Posterior vena cava (tissue), 2 donors: ENCODE measurements at regions of chr22 and their contacts with region 1.

Region 1: GRCh38 chr22:32528984-32529982 is 54.7 kb downstream of the FBXO7 start:
- DNase-seq: peak; percentile 96

Region 2: GRCh38 chr22:32564170-32565001 is 35.1 kb after region 1 on chr22:
- intact Hi-C with region 1: no loop called
- DNase-seq: peak; percentile 86

Region 3: DNA sequence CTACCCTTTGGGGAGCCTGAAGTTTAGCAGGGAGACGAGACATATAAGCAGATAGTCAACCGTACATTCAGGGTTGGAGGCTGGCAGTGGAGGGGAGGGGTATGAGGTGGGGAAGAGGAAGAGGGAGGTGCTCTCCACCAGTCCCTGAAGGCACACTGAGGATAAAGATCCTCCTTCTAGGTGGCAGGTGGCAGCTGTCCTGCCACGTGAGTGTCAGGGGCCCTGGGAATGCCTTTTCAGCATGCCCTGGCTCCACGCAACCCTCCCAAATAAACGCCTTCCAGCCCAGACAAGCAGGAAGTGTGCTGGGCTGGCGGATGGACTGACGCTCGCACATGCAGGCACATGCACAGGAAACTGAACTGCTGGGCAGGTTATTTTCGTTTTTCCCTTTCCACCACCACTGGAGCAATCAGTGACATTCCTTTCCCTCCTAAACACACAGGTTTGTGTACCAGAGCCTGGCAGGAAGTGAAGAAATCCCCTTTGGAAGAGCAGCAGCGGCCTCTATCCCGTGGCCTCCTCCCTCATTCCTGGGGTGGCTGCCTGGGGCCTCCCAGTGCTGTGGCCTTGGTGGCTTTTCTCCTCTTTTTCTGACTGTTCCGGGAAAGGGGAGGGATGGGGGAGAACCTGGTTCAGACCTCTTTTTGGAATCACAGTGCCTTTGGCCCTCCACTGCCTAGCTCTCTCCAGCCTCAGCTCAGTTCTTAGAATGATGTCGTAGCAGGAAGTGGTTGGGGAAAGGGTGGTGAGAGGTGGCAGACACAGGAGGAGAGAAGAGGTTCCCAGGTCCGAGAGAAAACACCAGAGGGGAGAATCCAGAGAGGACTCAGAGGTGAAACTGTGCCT is 115.2 kb after region 1 on chr22:
- intact Hi-C with region 1: loop called in 1 of 2 experiments (anchors 10 kb)
- DNase-seq: peak; percentile 86

Region 4: GRCh38 chr22:32796865-32797573 is 267.7 kb after region 1 on chr22:
- intact Hi-C with region 1: loop called (anchors 2 to 5 kb)
- DNase-seq: peak; percentile 91

Region 5: GRCh38 chr22:32985899-32986765 is 456.8 kb after region 1 on chr22:
- intact Hi-C with region 1: loop called in 1 of 2 experiments (anchors 5 kb)
- DNase-seq: no peak

Region 6: GRCh38 chr22:32992828-32993227 is 463.5 kb after region 1 on chr22:
- intact Hi-C with region 1: loop called in 1 of 2 experiments (anchors 1 kb)
- DNase-seq: no peak

Region 7: GRCh38 chr22:33000342-33001280 is 471.3 kb after region 1 on chr22:
- intact Hi-C with region 1: loop called in 1 of 2 experiments (anchors 5 kb)
- DNase-seq: peak; percentile 86